A673 (cell line): ENCODE measurements at regions of chr7 and their contacts with region 1.

Region 1: DNA sequence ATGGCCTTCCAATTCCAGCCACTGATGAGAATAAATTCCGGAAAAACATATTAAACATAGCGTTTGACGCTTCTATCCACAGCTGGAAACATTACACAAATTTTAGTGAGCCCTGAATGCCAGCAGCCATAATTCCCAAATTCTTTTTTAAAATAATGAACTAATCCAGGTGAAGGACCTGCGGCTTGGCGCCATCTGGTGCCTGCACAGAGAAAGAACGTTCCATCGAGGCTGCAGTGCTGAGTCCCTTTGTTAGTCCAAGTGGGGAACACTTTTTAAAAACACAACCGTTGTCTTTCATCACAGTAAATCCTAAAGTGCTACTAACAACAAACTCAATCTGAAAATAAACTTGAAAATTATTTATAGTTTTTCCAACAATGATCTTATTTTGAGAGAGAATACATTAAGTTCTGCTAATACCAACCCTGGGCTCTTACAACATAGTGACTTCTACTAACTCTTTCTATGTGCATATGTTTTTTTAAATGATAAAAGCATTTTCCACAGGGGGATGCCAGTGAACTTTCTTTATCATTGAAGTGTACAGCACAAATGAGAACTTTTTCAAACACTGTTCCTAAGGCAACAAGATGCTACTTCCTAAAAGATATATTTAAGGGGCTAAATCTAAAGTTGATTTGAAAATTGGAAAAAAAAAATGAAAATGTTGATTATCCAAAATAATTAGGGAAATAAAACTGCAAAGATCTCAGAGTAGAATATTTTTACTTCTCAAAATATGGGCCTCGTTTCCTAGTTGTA is 166.9 kb upstream of the RNF32 start:
- DNase-seq: peak; percentile 43
- H3K4me3 ChIP-seq: no peak overlapping the region
- H3K27ac ChIP-seq: no peak overlapping the region
- H3K4me1 ChIP-seq: no peaks in the 10 kb centered on the region
- H3K27me3 ChIP-seq: peaks cover 48% of the 10 kb centered on the region
- CTCF ChIP-seq: peak; percentile 83

Region 2: DNA sequence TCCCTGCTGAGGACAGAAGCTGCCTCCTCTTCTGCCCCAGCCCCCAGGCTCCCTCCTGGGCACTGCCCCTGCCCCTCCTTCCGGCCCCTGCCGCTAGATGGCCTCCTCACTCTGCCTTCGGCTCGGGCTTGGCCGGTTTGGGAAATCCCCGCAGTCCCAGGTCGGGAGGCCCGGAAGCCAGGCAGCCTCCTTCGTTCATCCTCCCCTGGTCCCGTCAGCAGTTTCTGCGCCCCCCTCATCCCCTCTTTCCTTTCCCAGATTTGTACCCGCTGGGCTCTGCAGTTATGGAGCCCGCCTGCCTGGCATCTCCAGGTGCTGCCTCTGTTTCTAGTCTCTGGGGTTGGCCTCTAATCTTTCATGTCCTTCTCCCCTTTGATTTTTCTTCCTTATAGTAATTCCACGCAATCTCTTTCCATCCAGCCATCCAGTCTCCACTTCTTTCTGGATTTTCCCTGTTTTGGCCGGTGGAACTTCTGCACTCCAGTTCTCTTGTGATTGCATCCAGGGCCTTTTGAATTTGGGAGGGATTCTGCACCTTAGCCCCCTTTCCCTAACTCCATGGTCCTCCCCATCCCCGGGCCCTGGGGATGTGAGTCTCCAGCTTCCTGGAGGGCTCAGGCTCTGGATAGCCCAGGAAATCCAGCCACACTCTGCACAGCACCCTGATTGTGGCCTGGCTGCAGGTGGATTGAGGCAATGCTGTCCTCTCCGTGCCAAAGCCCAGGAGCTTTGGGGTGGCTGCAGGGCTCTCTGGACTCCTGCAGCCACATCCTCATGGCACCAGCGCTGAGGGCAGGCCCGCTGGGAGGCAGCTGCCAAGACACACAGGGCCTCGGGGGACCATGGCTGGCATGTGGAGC is 658.1 kb before region 1 on chr7:
- CTCF ChIA-PET with region 1: no interaction called
- POLR2A ChIA-PET with region 1: no interaction called
- intact Hi-C with region 1: loop called (anchors 2 kb)
- DNase-seq: peak; percentile 56
- H3K4me3 ChIP-seq: no peak overlapping the region
- H3K27ac ChIP-seq: no peak overlapping the region
- H3K4me1 ChIP-seq: no peaks in the 10 kb centered on the region
- H3K27me3 ChIP-seq: peaks cover 66% of the 10 kb centered on the region
- CTCF ChIP-seq: peak; percentile 64